ENCODE measurements at regions of chr20 and their contacts with region 1.

Region 1: DNA sequence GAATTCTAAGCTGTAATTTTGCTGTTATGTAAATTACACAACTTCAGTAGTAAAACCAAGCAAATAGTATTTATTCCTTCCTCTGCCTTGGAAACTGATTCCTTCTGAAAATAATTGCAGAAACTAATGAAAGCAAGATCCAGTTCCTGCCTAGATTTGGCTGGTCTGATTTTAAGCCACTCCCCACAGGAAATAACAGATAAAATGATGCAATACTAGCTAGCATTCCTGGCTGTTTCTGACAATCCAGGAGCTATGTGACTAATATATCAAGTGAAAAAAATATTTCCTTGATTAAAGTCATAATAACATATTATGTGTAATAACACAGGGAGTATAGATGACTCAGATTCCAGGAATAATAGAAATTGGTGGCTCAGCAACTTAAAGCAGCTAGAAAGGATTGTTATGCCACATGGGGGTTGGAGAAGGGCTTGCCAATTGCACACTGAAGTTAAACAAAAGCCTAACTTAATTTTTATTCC is 182.7 kb upstream of the SALL4 start:
- DNase-seq: peak; percentile 96
- H3K4me3 ChIP-seq: no peak overlapping the region
- H3K27ac ChIP-seq: peak overlapping the region; percentile 82
- H3K4me1 ChIP-seq: peaks cover 13% of the 10 kb centered on the region
- H3K27me3 ChIP-seq: no peaks in the 10 kb centered on the region
- CTCF ChIP-seq: no peak
- POLR2A ChIP-seq: no peak

Region 2: DNA sequence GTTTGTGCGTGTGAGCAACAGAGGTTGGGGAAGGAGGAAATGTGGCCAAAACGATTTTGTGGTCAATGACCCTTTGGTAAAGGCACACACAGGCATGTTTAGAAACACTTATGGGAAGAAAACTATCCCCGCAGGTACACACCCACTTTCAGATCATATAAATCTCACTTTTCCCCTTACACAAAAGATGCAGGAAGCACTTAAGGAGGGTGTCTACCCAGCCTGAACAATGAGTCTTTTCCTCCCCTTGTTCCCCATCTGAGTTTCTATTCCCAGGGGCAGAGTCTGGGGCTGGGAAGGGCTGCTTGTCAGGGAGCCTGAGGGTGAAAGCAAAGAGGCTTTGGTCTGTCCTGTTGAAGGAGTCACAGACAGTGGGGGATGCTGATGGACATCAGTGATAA is 10.6 kb after region 1 on chr20:
- CTCF ChIA-PET with region 1: interaction called, 4 read pairs
- POLR2A ChIA-PET with region 1: no interaction called
- dilution Hi-C with region 1: no loop called
- intact Hi-C with region 1: loop called (anchors 1 kb)
- DNase-seq: peak; percentile 82
- H3K4me3 ChIP-seq: no peak overlapping the region
- H3K27ac ChIP-seq: peak overlapping the region; percentile 45
- H3K4me1 ChIP-seq: peaks cover 11% of the 10 kb centered on the region
- H3K27me3 ChIP-seq: no peaks in the 10 kb centered on the region
- CTCF ChIP-seq: no peak
- POLR2A ChIP-seq: no peak

Region 3: GRCh38 chr20:52031563-52032303 is 46.8 kb after region 1 on chr20:
- CTCF ChIA-PET with region 1: interaction called, 4 read pairs
- POLR2A ChIA-PET with region 1: no interaction called
- dilution Hi-C with region 1: no loop called
- intact Hi-C with region 1: loop called (anchors 1 kb)
- DNase-seq: peak; percentile 98
- H3K4me3 ChIP-seq: no peak overlapping the region
- H3K27ac ChIP-seq: peak overlapping the region; percentile 95
- H3K4me1 ChIP-seq: peaks cover 28% of the 10 kb centered on the region
- H3K27me3 ChIP-seq: no peaks in the 10 kb centered on the region
- CTCF ChIP-seq: no peak
- POLR2A ChIP-seq: no peak

Region 4: GRCh38 chr20:52242237-52243230 is 257.6 kb after region 1 on chr20:
- CTCF ChIA-PET with region 1: no interaction called
- POLR2A ChIA-PET with region 1: no interaction called
- dilution Hi-C with region 1: no loop called
- intact Hi-C with region 1: no loop called
- DNase-seq: peak; percentile 22
- H3K4me3 ChIP-seq: no peak overlapping the region
- H3K27ac ChIP-seq: no peak overlapping the region
- H3K4me1 ChIP-seq: no peaks in the 10 kb centered on the region
- H3K27me3 ChIP-seq: no peaks in the 10 kb centered on the region
- CTCF ChIP-seq: peak in 1 of 2 donors; percentile 19
- POLR2A ChIP-seq: no peak